Right ventricle myocardium inferior (tissue), 1 donor: ENCODE measurements at regions of chr9 and their contacts with region 1.

Region 1: DNA sequence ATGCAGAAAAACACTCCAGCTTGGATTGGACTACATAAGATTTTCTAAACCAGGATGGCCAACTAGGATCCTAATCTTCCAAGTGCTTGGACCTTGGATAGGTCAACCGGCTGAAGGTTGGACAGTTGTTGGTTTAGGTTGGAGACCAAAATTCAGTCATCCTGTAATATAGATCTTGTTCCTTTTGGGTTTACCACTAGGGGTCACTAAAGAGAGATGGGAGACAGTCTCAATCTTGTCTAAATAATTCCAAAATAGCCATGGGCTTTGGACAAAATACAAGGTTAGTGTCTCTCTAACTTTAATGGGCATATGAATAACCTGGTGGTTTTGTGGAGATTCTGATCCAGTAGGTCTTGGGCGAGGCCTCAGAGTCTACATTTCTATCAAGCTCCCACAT is 148.7 kb upstream of the ERCC6L2 start:
- DNase-seq: no peak
- ATAC-seq: peak; percentile 44

Region 2: DNA sequence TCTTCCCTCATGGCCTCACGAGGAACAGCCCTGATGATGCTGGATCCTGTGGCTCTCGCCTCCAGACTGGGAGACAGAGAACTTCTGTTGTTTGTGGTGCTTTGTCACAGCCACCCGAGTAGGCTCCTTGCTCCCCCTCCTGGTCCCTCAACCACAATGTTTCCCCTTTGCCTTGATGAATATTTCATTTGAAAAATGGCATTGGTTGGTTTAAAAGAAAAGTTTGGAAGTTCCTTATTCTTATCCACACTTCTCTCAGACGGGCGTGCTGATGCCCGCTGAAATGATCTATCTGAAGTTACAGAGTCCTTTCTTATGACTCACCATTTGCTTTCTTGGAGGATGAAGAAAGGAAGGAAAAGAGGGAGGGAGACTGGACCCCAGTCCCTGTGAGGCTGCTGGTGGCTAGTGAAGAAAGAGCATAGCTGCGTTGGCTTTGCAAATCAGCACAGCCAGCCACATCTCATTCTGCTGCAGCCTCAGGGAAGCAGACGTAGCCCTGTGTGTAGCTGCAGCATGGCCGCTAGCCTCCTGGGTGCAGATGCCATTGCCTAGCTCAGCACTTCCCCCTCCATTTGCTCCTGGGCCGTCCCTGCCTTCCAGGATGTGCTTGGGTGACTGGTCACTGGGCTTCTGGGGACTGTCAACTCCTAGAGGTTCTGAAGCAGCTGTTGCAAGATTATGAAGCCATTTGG is 334.7 kb after region 1 on chr9:
- intact Hi-C with region 1: loop called (anchors 10 kb)
- DNase-seq: no peak
- ATAC-seq: peak; percentile 74

Region 3: GRCh38 chr9:96136992-96137670 is 410.4 kb after region 1 on chr9:
- intact Hi-C with region 1: no loop called
- DNase-seq: no peak
- ATAC-seq: no peak

Region 4: DNA sequence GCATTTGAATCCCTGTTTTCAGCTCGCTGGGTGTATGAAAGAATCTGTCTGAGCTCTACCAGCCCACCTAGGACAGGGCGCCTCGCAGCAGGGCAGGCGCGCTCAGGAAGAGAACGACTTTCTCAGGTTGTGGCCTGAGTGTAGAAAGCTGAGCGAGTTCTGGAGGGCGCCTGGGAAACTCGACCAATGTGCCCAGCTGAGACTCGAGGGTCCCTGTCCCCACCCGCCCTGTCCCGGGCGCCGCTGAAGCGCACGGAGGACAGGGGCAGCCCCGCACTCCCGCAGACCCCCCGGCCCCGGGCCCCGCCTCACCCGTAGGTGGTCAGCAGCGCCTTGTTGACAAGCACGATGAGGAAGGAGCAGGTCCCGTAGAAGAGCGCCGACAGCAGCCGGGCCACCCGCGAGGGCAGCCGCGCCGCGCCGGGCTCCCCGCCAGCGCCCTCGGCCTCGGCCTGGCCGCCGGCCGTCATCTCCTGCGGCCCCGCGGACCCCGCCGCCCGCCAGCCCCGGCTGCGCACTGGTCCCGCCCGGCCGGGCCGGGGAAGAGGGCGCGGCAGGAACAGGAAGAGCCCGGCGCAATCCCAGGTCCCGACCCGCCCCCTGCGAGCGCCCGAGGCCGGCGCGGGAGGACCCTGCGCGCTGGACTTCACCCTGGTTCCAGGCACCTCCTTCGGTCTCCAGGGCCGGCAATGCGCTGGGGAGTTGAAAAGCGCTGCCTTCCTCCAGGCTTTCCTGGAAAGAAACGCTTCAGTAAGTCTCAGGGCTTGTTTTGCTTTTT is 656.6 kb after region 1 on chr9 and contains the start of gene SLC35D2:
- intact Hi-C with region 1: no loop called
- DNase-seq: peak; percentile 84
- ATAC-seq: peak; percentile 96
- total RNA-seq, gene SLC35D2: 14.7 TPM